ENCODE measurements at regions of chr4 and their contacts with region 1.

Region 1: GRCh38 chr4:98905839-98906238 is 23.1 kb downstream of the EIF4E start:
- DNase-seq: no peak
- ATAC-seq: no peak
- H3K4me3 ChIP-seq: no peak overlapping the region
- H3K4me3 Mint-ChIP-seq: peak overlapping the region in 3 of 10 donors; percentile 15 to 55 (median 23)
- H3K27ac ChIP-seq: no peak overlapping the region
- H3K27ac Mint-ChIP-seq: peak overlapping the region in 6 of 9 donors; percentile 1 to 60 (median 42)
- H3K4me1 ChIP-seq: peaks cover 17% of the 10 kb centered on the region in 2 donors
- H3K4me1 Mint-ChIP-seq: peaks cover 27 to 89% (median 73%) of the 10 kb centered on the region in 7 donors
- H3K27me3 ChIP-seq: no peaks in the 10 kb centered on the region
- H3K27me3 Mint-ChIP-seq: no peaks in the 10 kb centered on the region

Region 2: GRCh38 chr4:98166025-98166730 is 739.7 kb before region 1 on chr4:
- CTCF ChIA-PET with region 1: no interaction called
- POLR2A ChIA-PET with region 1: no interaction called
- intact Hi-C with region 1: no loop called
- DNase-seq: no peak
- ATAC-seq: no peak
- H3K4me3 ChIP-seq: no peak overlapping the region
- H3K4me3 Mint-ChIP-seq: no peak overlapping the region
- H3K27ac ChIP-seq: no peak overlapping the region
- H3K27ac Mint-ChIP-seq: no peak overlapping the region
- H3K4me1 ChIP-seq: no peaks in the 10 kb centered on the region
- H3K4me1 Mint-ChIP-seq: no peaks in the 10 kb centered on the region
- H3K27me3 ChIP-seq: no peaks in the 10 kb centered on the region
- H3K27me3 Mint-ChIP-seq: peaks cover 0 to 13% (median 0%) of the 10 kb centered on the region in 5 donors

Region 3: GRCh38 chr4:98510757-98511517 is 394.9 kb before region 1 on chr4:
- CTCF ChIA-PET with region 1: no interaction called
- POLR2A ChIA-PET with region 1: no interaction called
- intact Hi-C with region 1: no loop called
- DNase-seq: peak in 1 of 9 donors; percentile 60
- ATAC-seq: no peak
- H3K4me3 ChIP-seq: no peak overlapping the region
- H3K4me3 Mint-ChIP-seq: peak overlapping the region in 1 of 10 donors; percentile 49
- H3K27ac ChIP-seq: no peak overlapping the region
- H3K27ac Mint-ChIP-seq: peak overlapping the region in 1 of 9 donors; percentile 19
- H3K4me1 ChIP-seq: peaks cover 0 to 5% of the 10 kb centered on the region in 2 donors
- H3K4me1 Mint-ChIP-seq: peaks cover 11 to 59% (median 29%) of the 10 kb centered on the region in 7 donors
- H3K27me3 ChIP-seq: no peaks in the 10 kb centered on the region
- H3K27me3 Mint-ChIP-seq: no peaks in the 10 kb centered on the region

Region 4: GRCh38 chr4:98546910-98547594 is 358.8 kb before region 1 on chr4:
- CTCF ChIA-PET with region 1: no interaction called
- POLR2A ChIA-PET with region 1: no interaction called
- intact Hi-C with region 1: no loop called
- DNase-seq: no peak
- ATAC-seq: peak; percentile 12
- H3K4me3 ChIP-seq: no peak overlapping the region
- H3K4me3 Mint-ChIP-seq: no peak overlapping the region
- H3K27ac ChIP-seq: no peak overlapping the region
- H3K27ac Mint-ChIP-seq: peak overlapping the region in 1 of 9 donors; percentile 38
- H3K4me1 ChIP-seq: peaks cover 0 to 6% of the 10 kb centered on the region in 2 donors
- H3K4me1 Mint-ChIP-seq: peaks cover 11 to 31% (median 17%) of the 10 kb centered on the region in 7 donors
- H3K27me3 ChIP-seq: no peaks in the 10 kb centered on the region
- H3K27me3 Mint-ChIP-seq: no peaks in the 10 kb centered on the region

Region 5: GRCh38 chr4:98890702-98891455 is 15.0 kb before region 1 on chr4:
- CTCF ChIA-PET with region 1: no interaction called
- POLR2A ChIA-PET with region 1: no interaction called
- intact Hi-C with region 1: loop called in 1 of 2 experiments (anchors 2 kb)
- DNase-seq: no peak
- ATAC-seq: no peak
- H3K4me3 ChIP-seq: no peak overlapping the region
- H3K4me3 Mint-ChIP-seq: no peak overlapping the region
- H3K27ac ChIP-seq: no peak overlapping the region
- H3K27ac Mint-ChIP-seq: peak overlapping the region in 4 of 9 donors; percentile 36 to 49 (median 40)
- H3K4me1 ChIP-seq: no peaks in the 10 kb centered on the region
- H3K4me1 Mint-ChIP-seq: peaks cover 6 to 39% (median 22%) of the 10 kb centered on the region in 7 donors
- H3K27me3 ChIP-seq: no peaks in the 10 kb centered on the region
- H3K27me3 Mint-ChIP-seq: no peaks in the 10 kb centered on the region

Measured in naive thymus-derived CD4-positive, alpha-beta T cell (primary cell).